H1 (cell line): ENCODE measurements at regions of chr21 and their contacts with region 1.

Region 1: GRCh38 chr21:16608209-16608830 is 878.5 kb downstream of the USP25 start:
- DNase-seq: no peak
- H3K4me3 ChIP-seq: no peak overlapping the region
- H3K27ac ChIP-seq: no peak overlapping the region
- H3K4me1 ChIP-seq: no peaks in the 10 kb centered on the region
- H3K27me3 ChIP-seq: no peaks in the 10 kb centered on the region
- CTCF ChIP-seq: peak in 2 of 3 experiments; percentile 64 to 65; a peak in 3 of 4 replicates
- EP300 ChIP-seq: no peak
- POLR2A ChIP-seq: no peak
- RAD21 ChIP-seq: peak; percentile 86 to 90

Region 2: DNA sequence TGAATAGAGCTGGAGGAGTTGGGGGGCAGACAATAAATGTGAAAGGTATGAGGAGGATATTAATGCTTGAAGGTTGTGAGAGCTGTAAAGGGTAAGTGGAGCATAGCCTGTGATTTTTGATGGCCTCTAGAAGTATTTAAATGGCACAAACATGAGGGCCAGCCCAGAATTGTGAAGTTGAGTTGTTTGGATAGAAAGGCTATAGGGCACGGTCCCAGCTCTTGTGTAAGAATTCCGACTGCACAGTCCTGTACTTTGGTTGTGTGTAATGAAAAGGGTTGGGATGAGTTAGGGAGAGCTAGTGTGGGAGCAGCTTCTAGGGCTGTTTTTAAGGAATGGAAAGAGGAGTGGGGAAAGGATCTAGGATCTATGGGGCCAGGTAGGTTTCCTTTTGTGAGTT is 213.0 kb before region 1 on chr21:
- CTCF ChIA-PET with region 1: no interaction called
- POLR2A ChIA-PET with region 1: no interaction called
- DNase-seq: no peak
- H3K4me3 ChIP-seq: no peak overlapping the region
- H3K27ac ChIP-seq: no peak overlapping the region
- H3K4me1 ChIP-seq: no peaks in the 10 kb centered on the region
- H3K27me3 ChIP-seq: no peaks in the 10 kb centered on the region
- CTCF ChIP-seq: no peak
- EP300 ChIP-seq: no peak
- POLR2A ChIP-seq: no peak
- RAD21 ChIP-seq: no peak

Region 3: GRCh38 chr21:16589006-16589898 is 19.1 kb before region 1 on chr21:
- CTCF ChIA-PET with region 1: interaction called, 10 read pairs
- POLR2A ChIA-PET with region 1: no interaction called
- DNase-seq: no peak
- H3K4me3 ChIP-seq: peak overlapping the region in 1 of 4 experiments; percentile 52; a peak in 2 of 8 replicates
- H3K27ac ChIP-seq: no peak overlapping the region
- H3K4me1 ChIP-seq: peaks cover 0 to 3% (median 2%) of the 10 kb centered on the region in 4 experiments; a peak in 4 of 7 replicates
- H3K27me3 ChIP-seq: no peaks in the 10 kb centered on the region
- CTCF ChIP-seq: no peak
- EP300 ChIP-seq: no peak
- POLR2A ChIP-seq: no peak
- RAD21 ChIP-seq: no peak

Region 4: GRCh38 chr21:16597753-16598152 is 10.6 kb before region 1 on chr21:
- CTCF ChIA-PET with region 1: interaction called, 17 read pairs
- POLR2A ChIA-PET with region 1: no interaction called
- DNase-seq: no peak
- H3K4me3 ChIP-seq: no peak overlapping the region
- H3K27ac ChIP-seq: no peak overlapping the region
- H3K4me1 ChIP-seq: no peaks in the 10 kb centered on the region
- H3K27me3 ChIP-seq: peaks cover 0 to 1% (median 0%) of the 10 kb centered on the region in 4 experiments; a peak in 1 of 7 replicates
- CTCF ChIP-seq: no peak
- EP300 ChIP-seq: no peak
- POLR2A ChIP-seq: no peak
- RAD21 ChIP-seq: no peak

Region 5: DNA sequence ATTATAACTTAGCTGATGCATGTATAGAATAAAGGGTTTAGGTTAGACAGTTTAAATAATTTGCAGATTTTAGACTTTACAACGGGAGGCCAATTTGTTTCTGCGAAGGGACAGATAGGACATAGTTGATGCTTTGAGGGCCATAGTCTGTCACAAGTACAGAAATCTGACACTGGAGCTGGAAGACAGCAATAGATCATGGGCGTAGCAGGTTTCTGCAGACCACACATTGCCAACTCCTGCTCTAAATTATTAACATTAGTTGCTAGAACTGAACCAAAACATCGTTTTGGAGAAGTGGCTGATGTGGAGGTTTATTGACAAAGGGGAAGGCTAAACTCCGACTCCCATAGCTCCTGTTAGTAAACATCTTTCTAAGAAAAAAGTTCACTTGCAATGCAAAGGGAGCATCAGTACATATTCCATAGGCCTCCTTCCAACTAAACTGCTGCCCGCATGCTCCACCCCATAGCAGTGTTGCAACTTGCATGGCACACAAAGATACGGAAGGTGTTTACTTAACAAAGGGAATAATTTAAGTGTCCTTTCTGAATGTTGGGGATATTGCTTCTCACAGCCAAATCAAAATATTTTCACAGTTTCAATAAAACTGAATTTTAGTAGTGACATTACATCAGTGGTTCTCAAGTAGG is 42.5 kb after region 1 on chr21:
- CTCF ChIA-PET with region 1: no interaction called
- POLR2A ChIA-PET with region 1: no interaction called
- DNase-seq: no peak
- H3K4me3 ChIP-seq: no peak overlapping the region
- H3K27ac ChIP-seq: no peak overlapping the region
- H3K4me1 ChIP-seq: peaks cover 0 to 2% (median 0%) of the 10 kb centered on the region in 4 experiments; a peak in 1 of 7 replicates
- H3K27me3 ChIP-seq: no peaks in the 10 kb centered on the region
- CTCF ChIP-seq: no peak
- EP300 ChIP-seq: no peak
- POLR2A ChIP-seq: no peak
- RAD21 ChIP-seq: no peak

Region 6: DNA sequence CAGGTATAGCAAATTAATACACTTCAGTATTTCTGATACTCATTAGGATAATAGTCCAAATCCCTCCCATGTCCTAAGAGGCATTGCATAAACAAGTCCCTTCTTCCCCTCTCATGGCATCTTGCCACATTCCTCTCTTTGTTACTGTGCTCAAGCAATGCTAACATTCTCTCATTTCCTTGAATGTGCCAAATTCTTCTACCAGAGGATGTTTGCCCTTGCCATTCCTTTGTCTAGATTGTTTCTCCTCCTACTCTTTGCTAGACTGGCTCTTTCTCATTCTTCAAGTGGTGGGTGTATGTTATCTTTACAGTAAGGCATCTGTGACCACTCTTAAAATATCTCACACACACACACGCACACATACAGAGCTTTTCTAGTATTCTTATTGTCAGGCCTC is 283.5 kb after region 1 on chr21:
- CTCF ChIA-PET with region 1: no interaction called
- POLR2A ChIA-PET with region 1: no interaction called
- DNase-seq: no peak
- H3K4me3 ChIP-seq: no peak overlapping the region
- H3K27ac ChIP-seq: no peak overlapping the region
- H3K4me1 ChIP-seq: no peaks in the 10 kb centered on the region
- H3K27me3 ChIP-seq: no peaks in the 10 kb centered on the region
- CTCF ChIP-seq: no peak
- EP300 ChIP-seq: no peak
- POLR2A ChIP-seq: no peak
- RAD21 ChIP-seq: no peak